SK-N-SH (cell line): ENCODE measurements at regions of chr5 and their contacts with region 1.

Region 1: GRCh38 chr5:109688971-109689739 is 572 bp upstream of the MAN2A1 start:
- DNase-seq: peak; percentile 96
- H3K4me3 ChIP-seq: peak overlapping the region; percentile 78 to 93
- H3K27ac ChIP-seq: peak overlapping the region; percentile 89 to 95
- H3K4me1 ChIP-seq: peaks cover 2 to 25% of the 10 kb centered on the region in 2 experiments; a peak in 3 of 4 replicates
- H3K27me3 ChIP-seq: no peaks in the 10 kb centered on the region
- CTCF ChIP-seq: no peak
- EP300 ChIP-seq: peak in 1 of 2 experiments; percentile 47; a peak in 2 of 4 replicates
- RAD21 ChIP-seq: no peak; the same call in 1 of the 2 replicates

Region 2: GRCh38 chr5:109496109-109496508 is 193.0 kb before region 1 on chr5:
- CTCF ChIA-PET with region 1: no interaction called
- POLR2A ChIA-PET with region 1: no interaction called
- DNase-seq: no peak
- H3K4me3 ChIP-seq: no peak overlapping the region
- H3K27ac ChIP-seq: no peak overlapping the region
- H3K4me1 ChIP-seq: no peaks in the 10 kb centered on the region; a peak in 1 of 4 replicates
- H3K27me3 ChIP-seq: no peaks in the 10 kb centered on the region
- CTCF ChIP-seq: no peak
- EP300 ChIP-seq: no peak
- RAD21 ChIP-seq: no peak

Region 3: GRCh38 chr5:110055302-110055701 is 366.1 kb after region 1 on chr5:
- CTCF ChIA-PET with region 1: interaction called, 11 read pairs
- POLR2A ChIA-PET with region 1: no interaction called
- DNase-seq: no peak
- H3K4me3 ChIP-seq: no peak overlapping the region
- H3K27ac ChIP-seq: no peak overlapping the region; a peak in 1 of 4 replicates
- H3K4me1 ChIP-seq: peaks cover 7 to 8% of the 10 kb centered on the region in 2 experiments; a peak in 3 of 4 replicates
- H3K27me3 ChIP-seq: no peaks in the 10 kb centered on the region
- CTCF ChIP-seq: no peak
- EP300 ChIP-seq: no peak
- RAD21 ChIP-seq: no peak